ENCODE measurements at regions of chr2 and their contacts with region 1.

Region 1: GRCh38 chr2:224946895-224947294 is 95.4 kb downstream of the DOCK10 start:
- DNase-seq: peak in 3 of 14 experiments; percentile 77 to 86 (median 80)
- ATAC-seq: peak; percentile 84
- H3K4me3 ChIP-seq: peak overlapping the region; percentile 52
- H3K4me3 Mint-ChIP-seq: peak overlapping the region; percentile 90
- H3K27ac ChIP-seq: peak overlapping the region; percentile 73 to 86
- H3K27ac Mint-ChIP-seq: peak overlapping the region; percentile 89
- H3K4me1 ChIP-seq: peaks cover 38% of the 10 kb centered on the region
- H3K4me1 Mint-ChIP-seq: peaks cover 81% of the 10 kb centered on the region
- H3K27me3 ChIP-seq: no peaks in the 10 kb centered on the region
- H3K27me3 Mint-ChIP-seq: no peaks in the 10 kb centered on the region
- CTCF ChIP-seq: no peak

Region 2: DNA sequence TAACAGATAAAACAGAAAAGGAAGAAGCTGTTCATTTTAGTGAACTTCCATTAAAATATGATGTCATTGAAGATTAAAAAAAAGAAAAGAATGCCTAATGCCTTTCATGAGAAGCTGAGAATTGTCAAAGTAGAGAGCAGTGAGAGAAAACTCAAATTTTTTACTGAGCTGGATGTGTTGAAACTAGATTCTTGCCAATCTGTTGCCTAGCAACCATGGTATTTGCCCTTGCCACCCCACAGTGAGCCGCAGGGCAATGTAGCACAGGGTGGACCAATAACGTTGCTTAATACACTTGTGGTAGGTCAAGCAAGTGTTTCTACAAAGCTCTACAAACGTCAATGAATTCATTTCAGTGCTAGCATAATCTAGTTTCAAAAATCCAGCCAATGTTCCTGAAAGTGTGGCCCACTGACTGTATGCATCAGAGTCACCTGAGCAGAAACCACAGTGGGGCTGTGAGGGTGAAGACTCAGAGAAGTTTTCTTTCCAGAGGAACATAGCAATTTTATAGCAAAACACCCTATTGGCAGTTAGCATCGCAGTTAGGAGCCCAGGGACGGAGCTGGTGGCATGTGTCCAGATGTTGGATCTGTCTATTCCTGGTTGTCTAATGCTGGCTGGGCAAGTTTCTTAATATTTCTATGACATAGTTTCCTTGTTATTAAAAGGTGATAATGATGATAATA is 36.9 kb before region 1 on chr2:
- CTCF ChIA-PET with region 1: no interaction called
- POLR2A ChIA-PET with region 1: interaction called, 4 read pairs
- intact Hi-C with region 1: loop called in 1 of 2 experiments (anchors 5 kb)
- DNase-seq: peak in 5 of 14 experiments; percentile 25 to 66 (median 35)
- ATAC-seq: peak; percentile 78
- H3K4me3 ChIP-seq: no peak overlapping the region
- H3K4me3 Mint-ChIP-seq: no peak overlapping the region
- H3K27ac ChIP-seq: no peak overlapping the region
- H3K27ac Mint-ChIP-seq: peak overlapping the region; percentile 69
- H3K4me1 ChIP-seq: peaks cover 6% of the 10 kb centered on the region
- H3K4me1 Mint-ChIP-seq: peaks cover 59% of the 10 kb centered on the region
- H3K27me3 ChIP-seq: no peaks in the 10 kb centered on the region
- H3K27me3 Mint-ChIP-seq: no peaks in the 10 kb centered on the region
- CTCF ChIP-seq: no peak

Region 3: GRCh38 chr2:224982910-224983711 is 36.2 kb after region 1 on chr2:
- CTCF ChIA-PET with region 1: interaction called, 4 read pairs
- POLR2A ChIA-PET with region 1: interaction called, 36 read pairs
- intact Hi-C with region 1: loop called (anchors 2 to 5 kb)
- DNase-seq: peak in 13 of 14 experiments; percentile 12 to 70 (median 45)
- ATAC-seq: peak; percentile 66
- H3K4me3 ChIP-seq: peak overlapping the region; percentile 3
- H3K4me3 Mint-ChIP-seq: peak overlapping the region; percentile 67
- H3K27ac ChIP-seq: peak overlapping the region; percentile 13 to 60
- H3K27ac Mint-ChIP-seq: peak overlapping the region; percentile 84
- H3K4me1 ChIP-seq: peaks cover 51% of the 10 kb centered on the region
- H3K4me1 Mint-ChIP-seq: peaks cover 79% of the 10 kb centered on the region
- H3K27me3 ChIP-seq: no peaks in the 10 kb centered on the region
- H3K27me3 Mint-ChIP-seq: no peaks in the 10 kb centered on the region
- CTCF ChIP-seq: no peak

Region 4: DNA sequence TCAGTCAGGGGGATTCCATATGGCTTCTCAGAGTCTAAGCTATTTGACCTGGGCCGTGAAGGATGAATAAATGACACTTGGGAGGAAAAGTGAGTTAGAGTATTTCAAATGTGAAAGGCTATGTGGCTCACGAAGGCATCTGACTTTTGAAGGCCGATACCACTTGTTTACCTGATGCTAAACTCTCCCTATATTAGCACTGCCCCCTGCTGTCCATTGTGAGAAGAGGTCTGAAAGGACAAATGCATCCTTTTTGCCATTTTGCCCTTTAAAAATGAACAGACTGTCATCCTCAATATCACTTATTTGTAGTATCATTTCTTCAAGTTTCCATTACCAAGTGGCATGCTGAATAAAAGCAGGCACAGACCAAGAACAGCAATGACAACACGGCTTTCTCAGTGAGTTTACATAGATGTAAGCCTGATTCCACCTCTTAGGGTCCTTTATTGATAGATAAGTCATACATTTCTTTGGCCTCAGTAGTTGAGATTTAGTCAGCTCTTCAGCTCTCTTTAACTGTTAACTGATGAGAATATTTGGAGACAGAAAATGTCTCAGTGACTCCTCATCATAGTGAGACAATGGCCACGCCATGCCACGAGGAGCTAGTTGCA is 55.3 kb after region 1 on chr2:
- CTCF ChIA-PET with region 1: interaction called, 9 read pairs
- POLR2A ChIA-PET with region 1: interaction called, 4 read pairs
- intact Hi-C with region 1: loop called in 1 of 2 experiments (anchors 5 kb)
- DNase-seq: peak; percentile 24 to 88 (median 52)
- ATAC-seq: peak; percentile 88
- H3K4me3 ChIP-seq: no peak overlapping the region
- H3K4me3 Mint-ChIP-seq: no peak overlapping the region
- H3K27ac ChIP-seq: no peak overlapping the region
- H3K27ac Mint-ChIP-seq: peak overlapping the region; percentile 83
- H3K4me1 ChIP-seq: peaks cover 44% of the 10 kb centered on the region
- H3K4me1 Mint-ChIP-seq: peaks cover 87% of the 10 kb centered on the region
- H3K27me3 ChIP-seq: no peaks in the 10 kb centered on the region
- H3K27me3 Mint-ChIP-seq: no peaks in the 10 kb centered on the region
- CTCF ChIP-seq: peak; percentile 74

Measured in CD4-positive, alpha-beta T cell (primary cell).